Activated B cell treated with CpG ODN at 0.5 μM for 24 hours (primary cell): ENCODE measurements at regions of chr5 and their contacts with region 1.

Region 1: GRCh38 chr5:76256116-76256889 is 146.8 kb upstream of the IQGAP2 start:
- DNase-seq: no peak
- ATAC-seq: peak; percentile 77
- H3K4me3 Mint-ChIP-seq: no peak overlapping the region
- H3K27ac Mint-ChIP-seq: no peak overlapping the region
- H3K4me1 Mint-ChIP-seq: peaks cover 2% of the 10 kb centered on the region
- H3K27me3 Mint-ChIP-seq: peaks cover 15% of the 10 kb centered on the region
- CTCF ChIP-seq: no peak

Region 2: DNA sequence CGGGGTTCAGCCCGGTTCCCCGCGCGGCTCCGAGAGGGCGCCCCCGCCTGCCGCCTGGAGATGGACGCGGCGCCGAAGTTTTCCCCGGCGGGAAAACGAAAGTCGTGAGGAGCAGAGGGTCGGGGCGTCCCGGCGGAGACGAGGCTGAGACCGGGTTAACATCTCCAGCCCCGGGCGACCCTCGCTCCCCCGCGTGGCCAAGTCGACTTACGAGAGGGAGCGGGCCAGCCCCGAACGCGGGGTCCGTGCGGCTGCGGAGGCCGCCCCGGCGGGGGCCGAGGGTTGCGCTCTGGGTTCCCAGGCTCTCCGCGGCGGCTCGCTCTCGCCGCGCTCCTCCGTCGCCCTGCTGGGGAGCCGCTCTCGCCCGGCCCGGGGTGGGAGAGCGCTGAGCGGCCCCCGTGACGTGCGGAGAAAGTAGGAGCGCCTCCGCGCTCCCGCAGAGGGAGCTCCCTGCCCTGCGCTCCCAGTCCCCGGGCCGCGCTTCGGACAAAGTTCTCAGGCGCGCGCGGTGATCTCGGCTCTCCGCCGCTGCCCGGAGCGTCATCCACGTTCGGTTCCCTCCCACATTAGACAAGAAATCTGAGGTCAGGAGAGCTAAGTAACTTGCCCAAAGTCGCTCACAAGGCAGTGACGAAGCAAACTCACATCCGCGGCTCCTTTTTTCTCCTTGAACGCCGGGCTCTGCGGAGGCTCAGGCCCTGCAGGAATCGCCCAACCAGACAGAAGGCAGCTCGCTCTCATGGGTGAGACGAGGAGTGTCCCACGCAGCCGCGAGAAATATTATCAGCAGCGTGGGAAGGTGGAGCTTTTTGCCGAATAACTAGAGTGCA is 1202.8 kb before region 1 on chr5:
- CTCF ChIA-PET with region 1: interaction called, 3 read pairs
- POLR2A ChIA-PET with region 1: no interaction called
- intact Hi-C with region 1: loop called (anchors 1 kb)
- DNase-seq: no peak
- ATAC-seq: no peak
- H3K4me3 Mint-ChIP-seq: peak overlapping the region; percentile 73
- H3K27ac Mint-ChIP-seq: no peak overlapping the region
- H3K4me1 Mint-ChIP-seq: peaks cover 10% of the 10 kb centered on the region
- H3K27me3 Mint-ChIP-seq: peaks cover 53% of the 10 kb centered on the region
- CTCF ChIP-seq: no peak

Region 3: DNA sequence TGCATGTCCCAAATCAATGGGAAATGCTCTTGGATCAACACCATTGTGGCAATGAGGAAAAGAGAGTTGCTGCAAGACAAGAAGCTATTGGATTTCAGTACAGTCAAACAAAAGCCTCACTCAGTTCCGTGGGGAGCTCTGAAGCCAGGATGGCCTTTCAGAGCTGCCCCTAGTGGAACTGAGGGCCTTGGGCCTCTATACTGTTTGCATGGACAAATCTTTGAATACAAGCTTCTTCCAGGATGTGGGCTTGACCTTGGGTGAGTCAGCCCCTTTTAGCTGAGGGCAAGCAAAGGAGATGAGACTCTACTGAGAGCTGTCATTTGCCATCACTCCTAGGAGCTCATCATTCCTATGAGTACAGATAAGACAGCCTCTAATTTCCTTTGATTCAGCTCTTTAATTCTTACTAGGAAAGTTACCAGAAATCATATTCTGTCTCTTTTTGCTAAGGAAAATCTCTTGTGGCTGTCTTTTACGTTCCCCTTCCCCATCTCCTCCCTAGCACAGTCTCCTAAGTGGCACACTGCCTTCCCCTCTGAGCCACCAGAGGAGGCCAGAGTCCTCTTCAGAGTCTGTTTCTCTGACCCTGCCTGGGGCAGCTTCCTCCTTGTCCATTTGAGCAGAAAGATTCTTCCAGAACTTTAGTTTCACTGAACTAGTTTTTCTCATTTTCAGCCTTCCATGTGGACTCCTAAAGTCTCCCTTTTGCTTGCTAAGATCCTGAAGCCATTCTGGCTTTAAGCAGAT is 370.3 kb before region 1 on chr5:
- CTCF ChIA-PET with region 1: no interaction called
- POLR2A ChIA-PET with region 1: no interaction called
- intact Hi-C with region 1: loop called (anchors 1 kb)
- DNase-seq: no peak
- ATAC-seq: no peak
- H3K4me3 Mint-ChIP-seq: no peak overlapping the region
- H3K27ac Mint-ChIP-seq: no peak overlapping the region
- H3K4me1 Mint-ChIP-seq: no peaks in the 10 kb centered on the region
- H3K27me3 Mint-ChIP-seq: no peaks in the 10 kb centered on the region
- CTCF ChIP-seq: no peak

Region 4: DNA sequence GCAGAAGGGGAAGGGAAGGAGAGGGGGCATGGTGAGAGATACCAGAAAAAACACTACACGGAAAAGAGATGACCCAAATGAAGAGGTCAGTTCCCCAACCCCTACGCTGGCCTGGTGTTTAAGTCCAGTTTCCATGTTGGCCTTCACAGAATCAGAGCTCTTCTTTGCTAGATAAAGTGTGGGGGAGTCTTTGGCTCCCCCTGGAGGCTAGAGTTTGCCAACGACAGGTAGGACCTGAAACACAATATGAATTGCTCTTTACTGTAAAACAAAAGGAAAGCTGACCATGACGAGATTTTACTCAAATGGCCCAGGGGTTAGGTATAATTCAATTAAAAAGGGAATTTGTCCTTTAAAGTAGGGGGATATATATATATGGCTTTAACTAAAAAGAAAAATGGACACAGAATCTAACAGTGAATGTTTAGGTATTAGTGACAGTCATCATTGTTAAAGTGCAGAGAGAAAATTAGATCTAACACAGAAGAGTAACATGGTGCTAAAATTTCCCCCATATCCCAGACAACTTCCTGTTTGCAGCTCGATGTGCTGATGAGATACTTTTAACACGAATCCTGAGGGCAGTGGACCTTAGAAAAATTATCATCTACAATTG is 81.1 kb before region 1 on chr5:
- CTCF ChIA-PET with region 1: interaction called, 3 read pairs
- POLR2A ChIA-PET with region 1: no interaction called
- intact Hi-C with region 1: loop called (anchors 1 kb)
- DNase-seq: peak; percentile 16
- ATAC-seq: peak; percentile 57
- H3K4me3 Mint-ChIP-seq: peak overlapping the region; percentile 2
- H3K27ac Mint-ChIP-seq: no peak overlapping the region
- H3K4me1 Mint-ChIP-seq: peaks cover 15% of the 10 kb centered on the region
- H3K27me3 Mint-ChIP-seq: peaks cover 2% of the 10 kb centered on the region
- CTCF ChIP-seq: no peak

Region 5: DNA sequence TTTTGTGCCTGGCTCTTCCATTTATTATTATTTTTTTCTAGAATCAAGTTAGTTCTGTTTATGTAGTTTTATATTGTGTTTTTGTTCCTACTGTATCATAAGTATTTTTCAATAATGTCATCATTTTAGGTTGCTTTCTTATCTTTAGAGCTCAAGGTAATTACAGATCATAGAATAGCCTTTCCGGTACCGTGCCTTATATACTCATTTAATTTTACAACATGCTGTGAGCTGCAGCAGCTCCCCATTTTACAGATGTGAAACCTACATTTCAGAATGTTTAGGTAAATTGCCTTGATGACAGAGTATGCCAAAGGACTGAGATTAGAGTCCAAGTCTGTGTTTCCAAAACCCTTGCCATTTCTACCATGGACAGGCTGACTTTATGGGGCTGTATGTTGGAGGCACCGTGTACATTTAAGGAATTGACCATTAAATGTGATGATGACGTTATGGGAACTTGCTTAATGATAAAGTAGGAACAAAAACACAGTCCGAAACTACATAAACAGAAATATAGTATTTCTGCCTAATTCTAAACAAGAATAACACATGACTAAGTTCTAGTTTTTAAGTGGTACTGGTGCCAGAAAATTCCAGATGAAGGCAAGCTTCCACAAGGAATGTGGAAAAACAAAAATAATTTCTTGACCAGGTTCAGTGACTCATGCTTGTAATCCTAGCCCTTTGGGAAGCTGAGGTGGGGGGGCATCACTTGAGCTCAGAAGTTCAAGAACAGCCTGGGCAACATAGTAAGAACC is 244.5 kb after region 1 on chr5:
- CTCF ChIA-PET with region 1: no interaction called
- POLR2A ChIA-PET with region 1: no interaction called
- intact Hi-C with region 1: no loop called
- DNase-seq: no peak
- ATAC-seq: no peak
- H3K4me3 Mint-ChIP-seq: no peak overlapping the region
- H3K27ac Mint-ChIP-seq: no peak overlapping the region
- H3K4me1 Mint-ChIP-seq: no peaks in the 10 kb centered on the region
- H3K27me3 Mint-ChIP-seq: no peaks in the 10 kb centered on the region
- CTCF ChIP-seq: no peak